ENCODE measurements at regions of chr2 and their contacts with region 1.

Region 1: DNA sequence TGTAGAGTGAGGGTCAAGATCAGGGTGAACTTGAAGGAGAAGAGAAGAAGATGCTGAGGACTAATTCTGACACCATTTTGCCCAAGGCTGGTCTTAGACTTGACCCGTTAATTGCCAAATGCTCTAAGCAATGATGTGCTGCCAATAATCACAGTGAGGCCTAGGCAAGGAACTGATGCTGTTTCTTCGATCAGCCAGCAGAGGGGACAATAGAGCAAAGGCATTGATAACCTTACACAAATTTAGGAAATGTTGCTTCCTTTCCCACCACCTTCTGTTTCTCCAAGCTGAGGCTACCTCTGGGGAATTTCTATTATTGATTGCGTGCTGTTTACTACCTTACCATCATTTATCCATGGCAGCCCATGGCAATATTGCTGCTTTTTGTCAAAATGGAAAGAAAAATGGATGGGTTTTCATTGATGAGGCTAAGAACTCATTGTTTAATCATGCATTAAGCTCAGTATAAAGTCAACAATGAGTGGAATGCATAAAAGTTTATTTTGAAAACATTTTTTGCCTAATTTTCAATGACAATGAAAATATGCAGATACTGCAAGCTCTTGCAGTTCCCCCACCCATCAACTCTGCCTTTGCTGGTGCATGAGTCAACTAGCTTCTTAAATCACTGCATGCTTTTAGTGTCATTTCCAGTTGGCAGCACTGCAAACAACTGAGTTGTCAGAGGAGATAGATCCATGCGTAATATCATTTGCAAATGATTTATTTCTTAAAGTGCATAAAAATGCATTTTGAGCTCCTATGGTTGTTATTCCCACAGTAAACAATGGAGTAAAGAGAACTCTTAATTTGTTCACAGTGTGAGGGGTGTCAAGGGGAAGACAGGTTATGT is 116.4 kb upstream of the NYAP2 start:
- DNase-seq: peak in 1 of 2 experiments; percentile 10
- H3K4me3 ChIP-seq: no peak overlapping the region
- H3K27ac ChIP-seq: no peak overlapping the region
- H3K4me1 ChIP-seq: peaks cover 0 to 4% (median 0%) of the 10 kb centered on the region in 4 experiments; a peak in 1 of 7 replicates
- H3K27me3 ChIP-seq: no peaks in the 10 kb centered on the region
- CTCF ChIP-seq: peak in 2 of 3 experiments; percentile 76 to 96; a peak in 3 of 4 replicates
- EP300 ChIP-seq: no peak
- POLR2A ChIP-seq: no peak
- RAD21 ChIP-seq: peak; percentile 85 to 86

Region 2: GRCh38 chr2:225223301-225223700 is 59.8 kb before region 1 on chr2:
- CTCF ChIA-PET with region 1: interaction called, 11 read pairs
- POLR2A ChIA-PET with region 1: no interaction called
- DNase-seq: no peak
- H3K4me3 ChIP-seq: no peak overlapping the region
- H3K27ac ChIP-seq: no peak overlapping the region
- H3K4me1 ChIP-seq: no peaks in the 10 kb centered on the region
- H3K27me3 ChIP-seq: no peaks in the 10 kb centered on the region
- CTCF ChIP-seq: no peak
- EP300 ChIP-seq: no peak
- POLR2A ChIP-seq: no peak
- RAD21 ChIP-seq: no peak

Region 3: DNA sequence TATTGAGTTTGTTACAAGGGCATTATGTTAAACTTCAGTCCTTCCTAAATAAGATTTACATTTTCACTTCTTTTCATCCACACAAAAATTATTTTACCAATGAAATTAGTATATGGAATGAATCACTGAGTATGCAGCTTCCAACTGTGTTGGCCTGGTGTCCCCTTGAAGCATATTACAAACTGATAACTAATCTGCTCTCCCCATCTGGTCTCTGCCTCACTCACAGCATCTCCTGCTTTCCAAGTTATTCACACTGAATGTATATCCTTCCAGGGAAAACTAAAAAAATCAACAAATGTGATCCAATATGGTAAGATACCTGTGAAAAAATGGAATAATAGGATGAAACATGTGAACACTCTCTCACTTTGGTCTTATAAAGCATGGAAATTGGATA is 26.4 kb after region 1 on chr2:
- CTCF ChIA-PET with region 1: interaction called, 10 read pairs
- POLR2A ChIA-PET with region 1: no interaction called
- DNase-seq: no peak
- H3K4me3 ChIP-seq: no peak overlapping the region
- H3K27ac ChIP-seq: no peak overlapping the region
- H3K4me1 ChIP-seq: no peaks in the 10 kb centered on the region
- H3K27me3 ChIP-seq: no peaks in the 10 kb centered on the region
- CTCF ChIP-seq: no peak
- EP300 ChIP-seq: no peak
- POLR2A ChIP-seq: no peak
- RAD21 ChIP-seq: no peak

Region 4: DNA sequence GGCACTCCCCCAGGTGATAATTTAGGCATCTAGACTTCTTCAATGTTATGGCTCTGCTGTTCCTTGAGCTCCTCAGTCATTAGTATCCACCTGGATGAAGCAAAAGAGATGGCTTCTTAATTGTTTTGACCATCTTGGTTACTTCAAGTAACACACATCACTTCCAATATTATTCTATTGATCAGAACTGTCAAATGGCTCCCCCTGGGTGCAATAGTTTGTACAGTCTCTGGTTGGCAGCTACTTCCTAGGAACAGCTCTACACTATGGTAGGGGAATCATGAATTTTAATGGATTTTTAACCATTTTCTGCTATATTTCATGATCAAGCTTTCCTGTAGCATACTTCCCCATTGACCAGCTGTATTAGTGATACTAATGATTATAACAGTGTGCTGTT is 273.4 kb after region 1 on chr2:
- CTCF ChIA-PET with region 1: interaction called, 15 read pairs
- POLR2A ChIA-PET with region 1: no interaction called
- DNase-seq: no peak
- H3K4me3 ChIP-seq: no peak overlapping the region
- H3K27ac ChIP-seq: no peak overlapping the region
- H3K4me1 ChIP-seq: no peaks in the 10 kb centered on the region
- H3K27me3 ChIP-seq: no peaks in the 10 kb centered on the region
- CTCF ChIP-seq: no peak
- EP300 ChIP-seq: no peak
- POLR2A ChIP-seq: no peak
- RAD21 ChIP-seq: peak; percentile 38 to 46

Region 5: GRCh38 chr2:225649274-225649673 is 366.2 kb after region 1 on chr2:
- CTCF ChIA-PET with region 1: interaction called, 11 read pairs
- POLR2A ChIA-PET with region 1: no interaction called
- DNase-seq: no peak
- H3K4me3 ChIP-seq: no peak overlapping the region
- H3K27ac ChIP-seq: no peak overlapping the region
- H3K4me1 ChIP-seq: no peaks in the 10 kb centered on the region
- H3K27me3 ChIP-seq: no peaks in the 10 kb centered on the region
- CTCF ChIP-seq: no peak
- EP300 ChIP-seq: no peak
- POLR2A ChIP-seq: no peak
- RAD21 ChIP-seq: peak; percentile 14 to 31; a peak in 2 of 4 replicates

Measured in H1 (cell line).